CD4-positive, alpha-beta memory T cell (primary cell): ENCODE measurements at regions of chr6 and their contacts with region 1.

Region 1: GRCh38 chr6:157021344-157021992 is 244.3 kb downstream of the ARID1B start:
- DNase-seq: peak; percentile 88 to 93 (median 91)
- H3K4me3 ChIP-seq: peak overlapping the region; percentile 54 to 86
- H3K4me3 Mint-ChIP-seq: peak overlapping the region; percentile 95 to 98 (median 96)
- H3K27ac ChIP-seq: peak overlapping the region; percentile 98
- H3K27ac Mint-ChIP-seq: peak overlapping the region; percentile 97 to 100 (median 99)
- H3K4me1 ChIP-seq: peaks cover 31% of the 10 kb centered on the region
- H3K4me1 Mint-ChIP-seq: peaks cover 30 to 55% (median 44%) of the 10 kb centered on the region in 4 donors
- H3K27me3 ChIP-seq: no peaks in the 10 kb centered on the region
- H3K27me3 Mint-ChIP-seq: no peaks in the 10 kb centered on the region

Region 2: GRCh38 chr6:156729248-156729647 is 292.2 kb before region 1 on chr6:
- CTCF ChIA-PET with region 1: no interaction called
- POLR2A ChIA-PET with region 1: no interaction called
- intact Hi-C with region 1: no loop called
- DNase-seq: no peak
- H3K4me3 ChIP-seq: no peak overlapping the region
- H3K4me3 Mint-ChIP-seq: no peak overlapping the region
- H3K27ac ChIP-seq: no peak overlapping the region
- H3K27ac Mint-ChIP-seq: no peak overlapping the region
- H3K4me1 ChIP-seq: no peaks in the 10 kb centered on the region
- H3K4me1 Mint-ChIP-seq: no peaks in the 10 kb centered on the region
- H3K27me3 ChIP-seq: no peaks in the 10 kb centered on the region
- H3K27me3 Mint-ChIP-seq: no peaks in the 10 kb centered on the region

Region 3: DNA sequence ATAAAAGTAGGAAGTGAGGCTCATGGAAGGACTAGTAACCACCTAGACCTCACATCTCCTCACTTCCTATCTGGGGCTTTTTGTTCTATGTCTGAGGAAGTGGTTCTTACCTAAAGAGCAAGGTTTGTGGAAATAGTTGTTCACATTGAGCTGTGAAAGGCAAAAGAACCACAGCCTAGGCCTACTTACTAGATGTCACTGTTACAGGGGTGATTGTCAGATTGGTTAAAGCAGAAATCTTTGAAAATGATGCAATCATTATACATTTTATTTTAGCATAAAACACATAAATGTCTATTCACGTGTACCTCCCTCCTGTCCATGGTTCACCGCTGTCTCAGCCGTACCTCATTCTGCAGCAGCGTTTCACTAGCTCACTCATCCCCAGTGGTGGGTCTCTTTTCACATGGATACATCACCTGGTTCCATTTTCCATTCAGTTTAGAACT is 33.1 kb after region 1 on chr6:
- CTCF ChIA-PET with region 1: no interaction called
- POLR2A ChIA-PET with region 1: interaction called, 7 read pairs
- intact Hi-C with region 1: loop called (anchors 1 kb)
- DNase-seq: peak; percentile 71 to 81 (median 75)
- H3K4me3 ChIP-seq: no peak overlapping the region
- H3K4me3 Mint-ChIP-seq: peak overlapping the region; percentile 6 to 80 (median 56)
- H3K27ac ChIP-seq: peak overlapping the region; percentile 54
- H3K27ac Mint-ChIP-seq: peak overlapping the region; percentile 85 to 95 (median 91)
- H3K4me1 ChIP-seq: peaks cover 34% of the 10 kb centered on the region
- H3K4me1 Mint-ChIP-seq: peaks cover 36 to 58% (median 40%) of the 10 kb centered on the region in 4 donors
- H3K27me3 ChIP-seq: no peaks in the 10 kb centered on the region
- H3K27me3 Mint-ChIP-seq: no peaks in the 10 kb centered on the region

Region 4: DNA sequence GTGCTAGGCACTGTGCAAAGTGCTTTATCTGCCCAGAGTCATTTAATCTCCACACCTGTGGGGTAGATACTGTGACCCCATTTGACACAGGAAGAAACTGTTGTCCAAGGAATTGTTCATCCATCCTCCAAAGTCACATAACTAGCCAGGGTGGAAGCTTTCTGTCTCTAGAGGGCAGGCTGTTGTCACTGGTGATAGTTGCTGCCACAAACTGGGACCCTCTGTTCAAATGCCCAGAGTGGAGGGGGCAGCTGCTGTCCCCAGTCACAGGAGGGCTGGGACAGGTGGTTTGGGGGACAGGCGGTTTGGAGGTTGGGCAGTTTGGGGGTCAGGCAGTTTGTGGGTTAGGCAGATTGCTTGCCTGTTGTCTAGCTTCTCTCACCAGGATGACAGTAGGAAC is 318.0 kb after region 1 on chr6:
- CTCF ChIA-PET with region 1: no interaction called
- POLR2A ChIA-PET with region 1: no interaction called
- intact Hi-C with region 1: no loop called
- DNase-seq: no peak
- H3K4me3 ChIP-seq: no peak overlapping the region
- H3K4me3 Mint-ChIP-seq: no peak overlapping the region
- H3K27ac ChIP-seq: no peak overlapping the region
- H3K27ac Mint-ChIP-seq: no peak overlapping the region
- H3K4me1 ChIP-seq: no peaks in the 10 kb centered on the region
- H3K4me1 Mint-ChIP-seq: peaks cover 0 to 1% (median 0%) of the 10 kb centered on the region in 4 donors
- H3K27me3 ChIP-seq: no peaks in the 10 kb centered on the region
- H3K27me3 Mint-ChIP-seq: peaks cover 26 to 30% of the 10 kb centered on the region in 2 donors